WTC11 (cell line): ENCODE measurements at regions of chr1 and their contacts with region 1.

Region 1: GRCh38 chr1:40951943-40952743 is 27.4 kb upstream of the CTPS1 start:
- DNase-seq: peak; percentile 91
- ATAC-seq: peak; percentile 83
- H3K4me3 Mint-ChIP-seq: no peak overlapping the region
- H3K27ac Mint-ChIP-seq: no peak overlapping the region
- H3K4me1 Mint-ChIP-seq: peaks cover 15% of the 10 kb centered on the region
- H3K27me3 Mint-ChIP-seq: peaks cover 5% of the 10 kb centered on the region
- CTCF ChIP-seq: peak; percentile 92

Region 2: GRCh38 chr1:40862008-40862863 is 89.9 kb before region 1 on chr1 and contains the start of gene CITED4:
- CTCF ChIA-PET with region 1: interaction called, 515 read pairs
- POLR2A ChIA-PET with region 1: interaction called, 46 read pairs
- DNase-seq: peak; percentile 98
- ATAC-seq: peak; percentile 91
- H3K4me3 Mint-ChIP-seq: peak within 1 kb of the TSS; percentile 71
- H3K27ac Mint-ChIP-seq: no peak within 1 kb of the TSS
- H3K4me1 Mint-ChIP-seq: peaks cover 18% of the 10 kb centered on the region
- H3K27me3 Mint-ChIP-seq: peaks cover 32% of the 10 kb centered on the region
- CTCF ChIP-seq: no peak
- total RNA-seq, gene CITED4: 22.3 to 24.6 TPM (median 23.9 TPM) in 3 replicates

Region 3: GRCh38 chr1:40877698-40878097 is 74.4 kb before region 1 on chr1:
- CTCF ChIA-PET with region 1: interaction called, 23 read pairs
- POLR2A ChIA-PET with region 1: no interaction called
- DNase-seq: no peak
- ATAC-seq: peak; percentile 74
- H3K4me3 Mint-ChIP-seq: no peak overlapping the region
- H3K27ac Mint-ChIP-seq: no peak overlapping the region
- H3K4me1 Mint-ChIP-seq: peaks cover 12% of the 10 kb centered on the region
- H3K27me3 Mint-ChIP-seq: peaks cover 9% of the 10 kb centered on the region
- CTCF ChIP-seq: no peak

Region 4: DNA sequence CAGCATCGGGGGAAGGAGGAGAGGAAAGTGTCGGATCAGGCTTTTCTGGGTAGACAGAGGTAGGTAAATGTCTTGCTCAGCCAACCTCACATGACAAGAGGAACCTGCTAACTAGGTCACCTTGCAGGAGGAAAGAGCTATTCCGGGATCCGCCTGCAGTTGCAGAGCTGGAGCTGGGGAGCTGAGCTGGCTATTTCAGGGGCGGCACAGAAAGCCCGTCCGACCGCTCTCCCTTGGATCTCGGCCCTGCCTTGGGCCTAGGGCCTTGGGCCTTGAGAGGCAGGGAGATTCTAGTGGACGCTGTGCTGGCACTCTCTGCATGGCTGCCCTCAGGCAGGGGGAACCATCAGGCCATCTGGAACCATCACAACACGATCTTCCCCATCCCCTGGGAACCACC is 29.2 kb before region 1 on chr1:
- CTCF ChIA-PET with region 1: interaction called, 42 read pairs
- POLR2A ChIA-PET with region 1: no interaction called
- DNase-seq: peak; percentile 23
- ATAC-seq: peak; percentile 72
- H3K4me3 Mint-ChIP-seq: no peak overlapping the region
- H3K27ac Mint-ChIP-seq: no peak overlapping the region
- H3K4me1 Mint-ChIP-seq: peaks cover 7% of the 10 kb centered on the region; the same call in 1 of the 2 replicates
- H3K27me3 Mint-ChIP-seq: peaks cover 5% of the 10 kb centered on the region; the same call in 1 of the 2 replicates
- CTCF ChIP-seq: no peak

Region 5: GRCh38 chr1:40939320-40940059 is 12.7 kb before region 1 on chr1:
- CTCF ChIA-PET with region 1: interaction called, 70 read pairs
- POLR2A ChIA-PET with region 1: interaction called, 5 read pairs
- DNase-seq: no peak
- ATAC-seq: no peak
- H3K4me3 Mint-ChIP-seq: no peak overlapping the region
- H3K27ac Mint-ChIP-seq: no peak overlapping the region
- H3K4me1 Mint-ChIP-seq: peaks cover 4% of the 10 kb centered on the region
- H3K27me3 Mint-ChIP-seq: no peaks in the 10 kb centered on the region; the same call in 1 of the 2 replicates
- CTCF ChIP-seq: no peak

Region 6: DNA sequence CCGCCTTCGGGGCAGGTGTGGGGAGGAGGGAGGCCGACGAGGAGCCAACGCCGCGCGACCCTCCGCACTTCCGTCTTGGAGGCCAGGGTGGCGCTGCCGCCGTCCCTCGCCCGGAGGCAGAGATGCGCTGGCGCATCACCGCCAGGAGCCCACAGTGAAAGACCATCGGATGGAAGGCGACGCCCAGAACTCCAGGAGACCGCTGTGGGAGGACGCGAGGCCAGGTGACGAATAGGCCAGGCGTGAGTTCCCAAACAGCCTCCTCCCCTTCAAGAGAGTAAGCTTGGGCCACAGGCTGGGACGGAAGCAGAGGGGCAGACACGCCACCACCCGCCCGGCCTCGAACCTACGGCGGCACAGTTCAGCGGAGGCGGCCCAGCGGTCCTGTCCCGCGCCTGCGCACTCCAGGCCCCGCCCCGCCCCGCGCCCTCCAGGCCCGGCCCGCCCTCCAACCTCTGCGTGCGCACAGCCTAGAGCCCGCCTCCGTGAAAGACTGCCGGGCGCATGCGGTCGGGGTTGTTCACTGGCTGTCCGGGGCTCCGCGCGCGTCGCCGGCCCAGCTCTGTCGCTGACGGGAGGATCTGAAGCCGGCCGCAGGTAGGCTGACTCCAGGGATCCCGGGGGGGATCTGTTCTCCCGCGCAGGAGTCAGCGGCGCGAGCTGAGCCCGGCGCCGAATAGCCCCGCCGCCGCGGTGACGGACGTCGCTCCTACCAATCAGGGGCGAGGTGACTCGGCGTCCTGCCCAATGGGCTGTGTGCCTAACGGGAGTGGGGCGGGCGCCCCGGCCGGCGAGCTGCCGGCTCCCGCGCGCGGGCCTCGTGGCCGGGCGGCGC is 27.3 kb after region 1 on chr1 and contains the start of gene CTPS1:
- CTCF ChIA-PET with region 1: interaction called, 17 read pairs
- POLR2A ChIA-PET with region 1: no interaction called
- DNase-seq: peak; percentile 94
- ATAC-seq: peak; percentile 87
- H3K4me3 Mint-ChIP-seq: peak within 1 kb of the TSS; percentile 83
- H3K27ac Mint-ChIP-seq: peak within 1 kb of the TSS; percentile 81
- H3K4me1 Mint-ChIP-seq: peaks cover 23% of the 10 kb centered on the region
- H3K27me3 Mint-ChIP-seq: no peaks in the 10 kb centered on the region
- CTCF ChIP-seq: no peak
- total RNA-seq, gene CTPS1: 65.7 to 73.4 TPM (median 65.8 TPM) in 3 replicates

Region 7: DNA sequence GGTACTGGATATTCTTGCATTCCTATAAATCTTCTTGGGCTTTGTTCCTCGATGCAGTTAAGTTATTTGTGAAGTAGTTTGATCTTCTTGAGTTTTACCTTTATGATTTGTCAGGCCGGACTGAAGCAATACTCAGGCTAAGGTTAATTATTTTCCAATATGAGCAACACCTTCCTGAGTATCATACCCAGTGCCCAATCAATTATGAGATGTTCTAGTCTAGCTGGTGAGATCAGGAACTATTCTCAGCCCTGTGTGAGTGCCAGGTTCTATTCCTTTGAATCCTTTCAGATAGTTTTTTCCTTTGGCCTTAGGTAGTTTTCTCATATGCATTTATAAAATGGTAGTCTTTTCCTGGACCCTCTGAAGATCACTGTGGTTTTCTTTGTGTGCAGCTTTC is 197.4 kb after region 1 on chr1:
- CTCF ChIA-PET with region 1: no interaction called
- POLR2A ChIA-PET with region 1: no interaction called
- DNase-seq: no peak
- ATAC-seq: no peak
- H3K4me3 Mint-ChIP-seq: no peak overlapping the region
- H3K27ac Mint-ChIP-seq: no peak overlapping the region
- H3K4me1 Mint-ChIP-seq: no peaks in the 10 kb centered on the region
- H3K27me3 Mint-ChIP-seq: no peaks in the 10 kb centered on the region
- CTCF ChIP-seq: no peak